AG04449 (cell line): ENCODE measurements at regions of chr12 and their contacts with region 1.

Region 1: GRCh38 chr12:7142056-7142644 is 12.0 kb downstream of the CLSTN3 start:
- DNase-seq: no peak
- H3K4me3 ChIP-seq: no peak overlapping the region
- CTCF ChIP-seq: peak; percentile 82

Region 2: GRCh38 chr12:6944381-6945186 is 197.6 kb before region 1 on chr12:
- CTCF ChIA-PET with region 1: interaction called, 15 read pairs
- POLR2A ChIA-PET with region 1: no interaction called
- DNase-seq: no peak
- H3K4me3 ChIP-seq: peak overlapping the region; percentile 66
- CTCF ChIP-seq: peak; percentile 89

Region 3: DNA sequence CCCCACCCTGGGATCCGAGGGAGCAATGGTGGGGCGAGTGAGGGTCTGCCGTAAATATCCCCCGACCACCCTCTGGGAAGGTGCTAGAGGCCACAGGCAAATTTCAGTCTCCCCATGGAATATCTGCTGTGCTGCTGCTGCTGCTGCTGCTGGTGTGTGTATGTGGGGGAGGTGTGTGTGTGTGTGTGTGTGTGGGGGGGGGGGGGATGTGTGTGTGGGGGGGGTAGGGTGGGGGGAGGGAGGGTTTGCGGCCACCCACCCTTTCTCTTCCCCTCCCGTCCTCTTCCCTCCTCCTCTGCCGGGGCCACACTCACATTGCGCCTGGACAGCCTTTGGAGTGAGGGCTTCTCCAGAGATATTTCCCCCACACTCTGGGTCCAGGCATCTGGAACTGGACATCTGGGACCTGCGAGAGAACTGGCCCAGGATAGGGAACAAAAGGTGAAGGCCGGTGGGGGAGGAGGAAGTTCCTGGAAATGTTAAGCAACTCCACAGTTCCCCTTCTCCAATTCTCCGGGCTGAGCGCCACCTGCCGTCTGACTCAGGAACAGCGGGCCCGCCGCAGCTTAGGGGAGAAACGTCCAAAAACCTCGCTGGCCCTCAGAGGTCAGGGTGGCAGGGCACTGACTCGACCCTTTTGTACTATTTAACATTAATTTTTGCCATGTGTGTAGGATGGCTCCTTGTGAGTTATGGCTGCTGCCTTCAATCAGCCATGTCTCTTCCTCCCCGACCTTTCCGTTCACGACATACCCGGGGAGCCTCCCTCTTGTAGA is 33.2 kb before region 1 on chr12 and contains the start of gene C1RL:
- CTCF ChIA-PET with region 1: interaction called, 26 read pairs
- POLR2A ChIA-PET with region 1: no interaction called
- DNase-seq: peak; percentile 34
- H3K4me3 ChIP-seq: peak within 1 kb of the TSS; percentile 81
- CTCF ChIP-seq: peak; percentile 95

Region 4: GRCh38 chr12:7155481-7156034 is 13.4 kb after region 1 on chr12:
- CTCF ChIA-PET with region 1: interaction called, 151 read pairs
- POLR2A ChIA-PET with region 1: no interaction called
- DNase-seq: no peak
- H3K4me3 ChIP-seq: no peak overlapping the region
- CTCF ChIP-seq: no peak

Region 5: GRCh38 chr12:7169951-7170350 is 27.8 kb after region 1 on chr12:
- CTCF ChIA-PET with region 1: interaction called, 61 read pairs
- POLR2A ChIA-PET with region 1: no interaction called
- DNase-seq: no peak
- H3K4me3 ChIP-seq: no peak overlapping the region
- CTCF ChIP-seq: no peak

Region 6: DNA sequence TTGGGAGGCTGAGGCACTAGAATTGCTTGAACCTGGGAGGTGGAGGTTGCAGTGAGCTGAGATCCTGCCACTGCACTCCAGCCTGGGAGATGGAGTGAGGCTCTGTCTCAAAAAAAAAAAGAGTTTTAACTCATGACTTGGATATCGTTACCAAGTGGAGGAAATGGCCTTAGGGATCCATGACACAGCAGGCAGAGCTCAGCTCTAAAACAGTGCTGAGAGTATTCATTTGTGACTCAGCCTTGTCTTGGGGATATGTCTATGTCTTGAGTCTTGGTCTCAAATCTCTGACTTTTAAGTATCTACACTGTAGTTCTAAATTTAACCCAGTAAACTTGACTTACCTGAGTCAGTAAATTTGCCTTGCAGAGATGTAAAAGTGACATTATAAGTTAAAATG is 38.5 kb after region 1 on chr12:
- CTCF ChIA-PET with region 1: interaction called, 23 read pairs
- POLR2A ChIA-PET with region 1: no interaction called
- DNase-seq: no peak
- H3K4me3 ChIP-seq: no peak overlapping the region
- CTCF ChIP-seq: no peak

Region 7: DNA sequence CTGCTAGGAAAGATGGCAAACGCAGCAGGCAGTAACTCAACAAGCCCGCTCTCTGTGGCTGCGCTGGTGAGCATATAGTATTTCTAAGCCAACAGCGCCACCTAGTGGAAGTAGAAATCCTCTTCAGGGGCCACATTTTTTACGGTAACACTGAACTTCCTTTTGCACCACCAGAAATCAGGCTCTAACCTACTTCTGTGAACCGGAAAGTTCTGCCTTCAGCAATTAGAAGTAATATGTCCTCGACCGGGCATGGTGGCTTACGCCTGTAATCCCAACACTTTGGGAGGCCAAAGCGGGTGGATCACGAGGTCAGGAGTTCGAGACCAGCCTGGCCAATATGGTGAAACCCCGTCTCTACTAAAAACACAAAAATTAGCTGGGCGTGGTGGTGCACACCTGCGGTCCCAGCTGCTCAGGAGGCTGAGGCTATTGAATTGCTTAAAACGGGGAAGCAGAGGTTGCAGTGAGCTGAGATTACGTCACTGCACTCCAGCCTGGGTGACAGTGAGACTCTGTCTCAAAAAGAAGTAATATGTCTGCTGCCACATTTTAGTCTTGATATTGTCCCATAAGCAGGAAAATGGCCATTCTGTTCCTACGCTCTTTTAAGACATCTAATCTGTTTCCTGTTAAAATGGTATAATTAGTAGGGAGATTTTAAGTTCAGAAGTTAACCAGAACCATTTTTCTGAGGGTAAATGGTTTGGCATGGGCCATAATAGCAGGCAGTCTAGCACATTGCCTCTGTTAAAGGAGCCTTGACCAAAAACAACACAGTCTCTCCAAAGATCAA is 496.8 kb after region 1 on chr12:
- CTCF ChIA-PET with region 1: interaction called, 11 read pairs
- POLR2A ChIA-PET with region 1: no interaction called
- DNase-seq: peak; percentile 12
- H3K4me3 ChIP-seq: no peak overlapping the region
- CTCF ChIP-seq: peak; percentile 63